GM12878 (cell line): ENCODE measurements at regions of chr16 and their contacts with region 1.

Region 1: GRCh38 chr16:3530371-3530914 is 29.6 kb downstream of the CLUAP1 start:
- DNase-seq: no peak
- ATAC-seq: no peak
- H3K4me3 ChIP-seq: no peak overlapping the region
- H3K27ac ChIP-seq: no peak overlapping the region
- H3K4me1 ChIP-seq: no peaks in the 10 kb centered on the region
- H3K27me3 ChIP-seq: no peaks in the 10 kb centered on the region
- CTCF ChIP-seq: no peak
- EP300 ChIP-seq: no peak
- POLR2A ChIP-seq: no peak
- RAD21 ChIP-seq: no peak

Region 2: DNA sequence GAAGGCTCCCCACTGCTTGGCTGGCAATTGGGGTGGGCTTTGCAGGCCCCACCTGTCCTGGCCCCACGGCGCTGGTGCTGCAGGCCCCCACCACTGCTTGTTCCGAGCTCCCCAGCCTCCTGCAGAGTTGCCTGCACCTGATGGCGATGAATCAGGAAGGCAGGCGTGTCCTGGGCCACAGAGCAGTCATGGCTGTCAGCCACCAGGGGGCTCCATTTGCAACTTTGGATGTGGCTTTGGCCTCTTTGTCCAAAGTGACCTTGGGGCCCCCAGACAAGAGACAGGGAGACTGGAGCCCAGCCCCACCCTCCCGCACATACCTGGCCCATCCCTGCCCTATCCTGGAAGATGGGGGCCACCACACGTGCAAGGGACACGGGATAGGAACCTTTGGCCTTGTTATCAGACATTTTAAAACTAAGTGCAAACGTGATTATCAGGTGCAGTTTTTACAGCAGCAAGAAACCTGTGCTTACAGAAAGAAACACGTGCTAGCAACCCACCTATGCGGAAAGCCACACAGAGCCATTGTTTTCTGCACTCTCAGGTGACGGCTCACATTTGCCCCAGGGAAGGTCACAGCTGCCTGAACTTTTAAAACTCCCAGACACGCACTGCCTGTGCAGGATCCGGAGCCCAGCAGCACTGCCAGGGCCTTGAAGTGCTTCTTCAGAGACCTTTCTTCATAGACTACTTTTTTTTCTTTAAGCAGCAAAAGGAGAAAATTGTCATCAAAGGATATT is 124.0 kb after region 1 on chr16 and contains the start of gene DNASE1:
- CTCF ChIA-PET with region 1: interaction called, 3 read pairs
- POLR2A ChIA-PET with region 1: no interaction called
- RAD21 ChIA-PET with region 1: no interaction called
- SMC1A ChIA-PET with region 1: no interaction called
- in situ Hi-C with region 1: no loop called
- intact Hi-C with region 1: loop called (anchors 1 kb)
- DNase-seq: peak; percentile 9
- ATAC-seq: peak; percentile 99
- H3K4me3 ChIP-seq: no peak within 1 kb of the TSS
- H3K27ac ChIP-seq: no peak within 1 kb of the TSS
- H3K4me1 ChIP-seq: no peaks in the 10 kb centered on the region
- H3K27me3 ChIP-seq: no peaks in the 10 kb centered on the region
- CTCF ChIP-seq: peak; percentile 70 to 87 (median 83)
- EP300 ChIP-seq: no peak
- POLR2A ChIP-seq: no peak
- RAD21 ChIP-seq: peak; percentile 59
- polyA plus RNA-seq, gene DNASE1: 0.23 to 1.7 TPM

Region 3: GRCh38 chr16:3665508-3665907 is 135.1 kb after region 1 on chr16:
- CTCF ChIA-PET with region 1: interaction called, 3 read pairs
- POLR2A ChIA-PET with region 1: no interaction called
- RAD21 ChIA-PET with region 1: no interaction called
- SMC1A ChIA-PET with region 1: no interaction called
- in situ Hi-C with region 1: no loop called
- intact Hi-C with region 1: loop called (anchors 1 kb)
- DNase-seq: no peak
- ATAC-seq: no peak
- H3K4me3 ChIP-seq: no peak overlapping the region
- H3K27ac ChIP-seq: no peak overlapping the region
- H3K4me1 ChIP-seq: no peaks in the 10 kb centered on the region
- H3K27me3 ChIP-seq: no peaks in the 10 kb centered on the region
- CTCF ChIP-seq: peak in 2 of 3 experiments; percentile 12 to 31; a peak in 4 of 6 replicates
- EP300 ChIP-seq: no peak
- POLR2A ChIP-seq: no peak
- RAD21 ChIP-seq: peak; percentile 29; the same call in 1 of the 2 replicates